ENCODE measurements at regions of chr16 and their contacts with region 1.

Region 1: GRCh38 chr16:20866145-20866772 is 33.9 kb downstream of the DCUN1D3 start:
- DNase-seq: peak in 1 of 3 donors; percentile 15
- H3K4me3 ChIP-seq: no peak overlapping the region
- H3K4me3 Mint-ChIP-seq: no peak overlapping the region
- H3K27ac ChIP-seq: no peak overlapping the region
- H3K27ac Mint-ChIP-seq: peak overlapping the region in 1 of 7 donors; percentile 15
- H3K4me1 ChIP-seq: peaks cover 7 to 9% of the 10 kb centered on the region in 2 donors
- H3K4me1 Mint-ChIP-seq: peaks cover 17% of the 10 kb centered on the region
- H3K27me3 ChIP-seq: no peaks in the 10 kb centered on the region
- H3K27me3 Mint-ChIP-seq: peaks cover 0 to 2% (median 0%) of the 10 kb centered on the region in 3 donors
- CTCF ChIP-seq: no peak

Region 2: DNA sequence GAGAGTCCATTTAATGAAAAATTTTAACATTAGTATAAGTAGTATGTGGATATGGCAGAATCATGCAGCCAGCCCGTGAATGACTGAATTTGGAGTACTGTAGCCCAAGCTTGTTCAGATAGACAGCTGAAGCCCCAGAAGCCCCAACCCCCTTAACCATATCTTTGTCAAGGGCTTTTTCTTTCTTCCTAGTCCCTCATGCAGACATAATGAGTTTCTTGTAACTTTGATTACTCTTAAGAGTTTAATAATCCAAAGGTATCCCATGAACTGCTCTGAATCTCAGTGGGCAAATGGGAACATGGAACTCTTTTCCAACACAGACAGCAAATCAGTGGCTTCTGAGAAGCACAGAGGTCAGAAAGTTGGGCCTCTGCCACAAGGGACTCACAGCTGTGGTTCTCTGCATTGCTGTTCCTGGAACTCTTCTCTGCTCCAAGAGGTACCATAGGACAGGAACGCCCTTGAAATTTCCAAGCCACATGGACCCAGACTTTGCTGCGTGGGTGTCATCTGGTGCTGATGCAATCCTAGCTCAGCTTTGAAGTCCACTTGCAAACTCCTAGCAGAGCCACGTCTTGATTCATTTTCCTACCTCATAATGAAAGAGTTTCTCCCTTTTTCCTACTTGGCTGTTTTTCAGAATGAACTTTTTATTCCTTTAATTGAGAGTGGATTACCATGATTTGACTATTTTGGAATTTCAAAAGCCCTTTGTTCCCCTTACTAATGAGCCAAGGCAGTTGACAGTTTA is 52.4 kb after region 1 on chr16:
- intact Hi-C with region 1: no loop called
- DNase-seq: no peak
- H3K4me3 ChIP-seq: no peak overlapping the region
- H3K4me3 Mint-ChIP-seq: no peak overlapping the region
- H3K27ac ChIP-seq: no peak overlapping the region
- H3K27ac Mint-ChIP-seq: no peak overlapping the region
- H3K4me1 ChIP-seq: peaks cover 14 to 22% of the 10 kb centered on the region in 2 donors
- H3K4me1 Mint-ChIP-seq: peaks cover 21% of the 10 kb centered on the region
- H3K27me3 ChIP-seq: no peaks in the 10 kb centered on the region
- H3K27me3 Mint-ChIP-seq: peaks cover 0 to 3% (median 2%) of the 10 kb centered on the region in 3 donors
- CTCF ChIP-seq: no peak

Region 3: GRCh38 chr16:20938426-20938825 is 72.2 kb after region 1 on chr16:
- intact Hi-C with region 1: loop called in 1 of 2 experiments (anchors 10 kb)
- DNase-seq: peak in 2 of 3 donors; percentile 9 to 14
- H3K4me3 ChIP-seq: no peak overlapping the region
- H3K4me3 Mint-ChIP-seq: no peak overlapping the region
- H3K27ac ChIP-seq: no peak overlapping the region
- H3K27ac Mint-ChIP-seq: peak overlapping the region in 1 of 7 donors; percentile 30
- H3K4me1 ChIP-seq: peaks cover 9 to 17% of the 10 kb centered on the region in 2 donors
- H3K4me1 Mint-ChIP-seq: peaks cover 11% of the 10 kb centered on the region
- H3K27me3 ChIP-seq: no peaks in the 10 kb centered on the region
- H3K27me3 Mint-ChIP-seq: peaks cover 1 to 8% (median 2%) of the 10 kb centered on the region in 3 donors
- CTCF ChIP-seq: no peak

Measured in CD14-positive monocyte (primary cell).